CD14-positive monocyte (primary cell): ENCODE measurements at regions of chr15 and their contacts with region 1.

Region 1: DNA sequence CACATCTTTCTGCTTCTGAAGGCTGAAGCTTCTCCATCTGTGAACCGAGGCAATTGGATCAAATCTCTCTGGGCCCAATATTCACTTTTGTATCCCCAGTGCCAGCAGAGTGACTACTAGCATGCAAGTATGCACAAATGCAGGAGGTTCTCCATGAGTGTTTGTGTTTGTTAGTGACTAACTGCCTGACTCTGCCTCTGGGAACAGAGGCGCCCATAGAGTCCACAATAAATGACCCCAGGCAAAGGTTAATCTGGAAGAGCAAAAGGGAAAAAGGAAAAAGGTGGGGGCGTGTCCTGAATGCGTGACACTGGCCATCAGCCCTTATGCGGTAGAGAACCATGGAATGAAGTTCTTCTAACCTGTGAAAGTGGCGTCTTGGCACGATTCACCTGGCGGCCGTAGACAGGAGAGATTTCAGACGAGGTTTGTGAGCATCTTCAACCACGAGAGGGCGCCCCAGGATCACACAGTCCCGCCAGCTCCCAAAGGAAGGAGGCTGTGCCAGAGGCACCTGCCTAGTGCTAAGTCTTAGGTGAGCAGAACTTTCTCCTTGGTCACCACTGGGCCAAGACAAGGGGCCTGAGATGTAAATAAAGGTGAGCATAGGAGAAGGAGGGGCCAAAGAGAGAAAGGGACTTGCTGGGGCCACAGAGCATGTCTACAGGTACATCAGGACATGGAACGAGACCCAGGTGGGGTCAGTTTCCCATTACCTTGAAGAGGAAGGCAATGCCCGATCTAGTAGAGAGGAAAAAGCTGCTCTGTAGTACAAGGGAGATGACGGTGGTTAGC is 44.2 kb downstream of the RBPMS2 start:
- DNase-seq: peak; percentile 60 to 75 (median 71)
- H3K4me3 ChIP-seq: no peak overlapping the region
- H3K4me3 Mint-ChIP-seq: peak overlapping the region in 1 of 2 donors; percentile 0
- H3K27ac ChIP-seq: no peak overlapping the region
- H3K27ac Mint-ChIP-seq: no peak overlapping the region
- H3K4me1 ChIP-seq: peaks cover 0 to 4% of the 10 kb centered on the region in 2 donors
- H3K4me1 Mint-ChIP-seq: peaks cover 5% of the 10 kb centered on the region
- H3K27me3 ChIP-seq: no peaks in the 10 kb centered on the region
- H3K27me3 Mint-ChIP-seq: peaks cover 7 to 14% (median 7%) of the 10 kb centered on the region in 3 donors
- CTCF ChIP-seq: peak; percentile 92

Region 2: GRCh38 chr15:64686216-64686631 is 45.0 kb before region 1 on chr15:
- intact Hi-C with region 1: loop called (anchors 1 to 2 kb)
- DNase-seq: peak; percentile 43 to 66 (median 56)
- H3K4me3 ChIP-seq: no peak overlapping the region
- H3K4me3 Mint-ChIP-seq: no peak overlapping the region
- H3K27ac ChIP-seq: no peak overlapping the region
- H3K27ac Mint-ChIP-seq: peak overlapping the region in 2 of 7 donors; percentile 47 to 84
- H3K4me1 ChIP-seq: peaks cover 7 to 9% of the 10 kb centered on the region in 2 donors
- H3K4me1 Mint-ChIP-seq: peaks cover 6% of the 10 kb centered on the region
- H3K27me3 ChIP-seq: no peaks in the 10 kb centered on the region
- H3K27me3 Mint-ChIP-seq: peaks cover 0 to 1% (median 0%) of the 10 kb centered on the region in 3 donors
- CTCF ChIP-seq: peak; percentile 75

Region 3: GRCh38 chr15:64809649-64810496 is 78.7 kb after region 1 on chr15:
- intact Hi-C with region 1: loop called in 1 of 2 experiments (anchors 10 kb)
- DNase-seq: peak; percentile 44 to 70 (median 70)
- H3K4me3 ChIP-seq: no peak overlapping the region
- H3K4me3 Mint-ChIP-seq: peak overlapping the region in 1 of 2 donors; percentile 48
- H3K27ac ChIP-seq: no peak overlapping the region
- H3K27ac Mint-ChIP-seq: peak overlapping the region in 1 of 7 donors; percentile 58
- H3K4me1 ChIP-seq: peaks cover 3 to 9% of the 10 kb centered on the region in 2 donors
- H3K4me1 Mint-ChIP-seq: peaks cover 18% of the 10 kb centered on the region
- H3K27me3 ChIP-seq: peaks cover 0 to 4% of the 10 kb centered on the region in 2 donors
- H3K27me3 Mint-ChIP-seq: peaks cover 0 to 21% (median 16%) of the 10 kb centered on the region in 3 donors
- CTCF ChIP-seq: peak; percentile 95

Region 4: GRCh38 chr15:64905119-64905831 is 174.1 kb after region 1 on chr15:
- intact Hi-C with region 1: loop called (anchors 2 to 5 kb)
- DNase-seq: peak; percentile 76 to 77 (median 77)
- H3K4me3 ChIP-seq: peak overlapping the region; percentile 5 to 65 (median 20)
- H3K4me3 Mint-ChIP-seq: peak overlapping the region; percentile 75 to 84
- H3K27ac ChIP-seq: peak overlapping the region in 1 of 2 donors; percentile 13
- H3K27ac Mint-ChIP-seq: peak overlapping the region; percentile 17 to 91 (median 73)
- H3K4me1 ChIP-seq: peaks cover 17 to 26% of the 10 kb centered on the region in 2 donors
- H3K4me1 Mint-ChIP-seq: peaks cover 31% of the 10 kb centered on the region
- H3K27me3 ChIP-seq: peaks cover 0 to 8% of the 10 kb centered on the region in 2 donors
- H3K27me3 Mint-ChIP-seq: peaks cover 7 to 16% (median 15%) of the 10 kb centered on the region in 3 donors
- CTCF ChIP-seq: peak; percentile 90

Region 5: DNA sequence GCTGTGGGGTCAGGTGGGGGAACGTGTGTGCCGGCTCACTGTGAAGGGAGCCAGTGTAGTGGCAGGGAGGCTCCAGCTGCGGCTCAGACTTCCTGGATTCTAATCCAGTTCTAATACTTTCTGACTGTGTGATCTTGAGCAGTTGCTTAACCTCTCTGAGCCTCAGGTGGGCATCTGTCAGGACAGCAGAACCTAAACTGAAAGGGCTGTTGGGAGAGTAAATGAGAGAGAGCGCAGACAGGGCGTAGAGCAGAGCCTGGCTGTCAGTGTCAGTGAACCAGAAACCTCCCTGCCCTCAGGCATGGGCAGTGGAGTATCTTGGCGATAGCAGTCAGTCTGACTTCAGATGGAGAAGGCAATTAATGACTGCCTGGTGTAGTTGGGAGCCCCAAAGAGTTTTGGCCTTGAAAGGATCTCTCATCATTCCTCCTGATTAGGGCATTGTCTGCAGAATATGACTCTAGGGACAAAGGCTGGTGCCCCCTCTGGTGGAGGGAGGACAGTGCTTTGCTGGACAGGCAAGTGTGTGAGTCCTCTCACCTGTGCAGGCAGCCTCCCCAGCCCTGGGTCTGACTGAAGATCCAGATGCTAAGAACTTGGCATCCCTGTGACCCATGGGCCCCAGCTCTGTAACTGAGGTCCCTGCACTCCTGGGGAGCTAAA is 354.9 kb after region 1 on chr15:
- intact Hi-C with region 1: loop called in 1 of 2 experiments (anchors 10 kb)
- DNase-seq: no peak
- H3K4me3 ChIP-seq: no peak overlapping the region
- H3K4me3 Mint-ChIP-seq: no peak overlapping the region
- H3K27ac ChIP-seq: no peak overlapping the region
- H3K27ac Mint-ChIP-seq: no peak overlapping the region
- H3K4me1 ChIP-seq: no peaks in the 10 kb centered on the region
- H3K4me1 Mint-ChIP-seq: peaks cover 8% of the 10 kb centered on the region
- H3K27me3 ChIP-seq: peaks cover 0 to 12% of the 10 kb centered on the region in 2 donors
- H3K27me3 Mint-ChIP-seq: peaks cover 15 to 41% (median 21%) of the 10 kb centered on the region in 3 donors
- CTCF ChIP-seq: peak; percentile 30